ENCODE measurements at regions of chr17 and their contacts with region 1.

Region 1: DNA sequence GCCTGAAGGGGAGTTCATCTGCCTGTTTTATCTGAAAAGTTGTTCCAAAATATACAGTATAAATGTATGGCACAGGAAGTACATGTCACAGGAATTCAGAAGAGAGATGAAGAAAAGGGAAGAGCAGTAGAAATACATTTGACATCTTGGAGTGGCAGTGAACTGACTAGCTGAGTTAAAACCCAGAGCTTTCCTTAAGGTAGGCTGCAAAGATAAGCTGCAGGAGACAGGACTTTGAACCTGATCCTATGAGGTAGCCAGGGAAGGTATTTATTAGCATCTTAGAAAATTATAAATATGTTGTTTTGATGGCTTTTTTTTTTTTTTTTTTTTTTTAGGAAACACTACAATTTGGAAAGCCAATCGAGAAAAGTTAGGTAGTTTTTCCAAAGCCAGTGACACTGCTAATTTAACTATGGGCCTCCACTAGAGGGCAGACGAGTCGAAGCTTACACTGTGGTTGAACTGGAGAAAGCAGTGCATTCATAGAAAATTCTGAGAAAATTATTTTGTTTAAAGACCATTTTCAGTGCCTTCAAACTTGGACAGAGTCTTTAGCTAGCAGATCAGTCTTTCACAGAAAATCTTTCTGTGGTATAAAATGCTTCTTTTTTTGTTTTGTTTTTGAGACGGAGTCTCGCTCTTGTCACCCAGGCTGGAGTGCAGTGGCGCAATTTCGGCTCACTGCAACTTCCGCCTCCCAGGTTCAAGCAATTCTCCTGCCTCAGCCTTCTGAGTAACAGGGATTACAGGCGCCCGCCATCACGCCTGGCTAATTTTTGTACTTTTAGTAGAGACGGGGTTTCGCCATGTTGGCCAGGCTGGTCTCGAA is 122.3 kb downstream of the SSH2 start:
- DNase-seq: peak; percentile 62
- ATAC-seq: peak; percentile 65
- H3K4me3 Mint-ChIP-seq: no peak overlapping the region
- H3K27ac Mint-ChIP-seq: no peak overlapping the region
- H3K4me1 Mint-ChIP-seq: peaks cover 6% of the 10 kb centered on the region; the same call in 1 of the 2 replicates
- H3K27me3 Mint-ChIP-seq: no peaks in the 10 kb centered on the region
- CTCF ChIP-seq: peak; percentile 64

Region 2: DNA sequence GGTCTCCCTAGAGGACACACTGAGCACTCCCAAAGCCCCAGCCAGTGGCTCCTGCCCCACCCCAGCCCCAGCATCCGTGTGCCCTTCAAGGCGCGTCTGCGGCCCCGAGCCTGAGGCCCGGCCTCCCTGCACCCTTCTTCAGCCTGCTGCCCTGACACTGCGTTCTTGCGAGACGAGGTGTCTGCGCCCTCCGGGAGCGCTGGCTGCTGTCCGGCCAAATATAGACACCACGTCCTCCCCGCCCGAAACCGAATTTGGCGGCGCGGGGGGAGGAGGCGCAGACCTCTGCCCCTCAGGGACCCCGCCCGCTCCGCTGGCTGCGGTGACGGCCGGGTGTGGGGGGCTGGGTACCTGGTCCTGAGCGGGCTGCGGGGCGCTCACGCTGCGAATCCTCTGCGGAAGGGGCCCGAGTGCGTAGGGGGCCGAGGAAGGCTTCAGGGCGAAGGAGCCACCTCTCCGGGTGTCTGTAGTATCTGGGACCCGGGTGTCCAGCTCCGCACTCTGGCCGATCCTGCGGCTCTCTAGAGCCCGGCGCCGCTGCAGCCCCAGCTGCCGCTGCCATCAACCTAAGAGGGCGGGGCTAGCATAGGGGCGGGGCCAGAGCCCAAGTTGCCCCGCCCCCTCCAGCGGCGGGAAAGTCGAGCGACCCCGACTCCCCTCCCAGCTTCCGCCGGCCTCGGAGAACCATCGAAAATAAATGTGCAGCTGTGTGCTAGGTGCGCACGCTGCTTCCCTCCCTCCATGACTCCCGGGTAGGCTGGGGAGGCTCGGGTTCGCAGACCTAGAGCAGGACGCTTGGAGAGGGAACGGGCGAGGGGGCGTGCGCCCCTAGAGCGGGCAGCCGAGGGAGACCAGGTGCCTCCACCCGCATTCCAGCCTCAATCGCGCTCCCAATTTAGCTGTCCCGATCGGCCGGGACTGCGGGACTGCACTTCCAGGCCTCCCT is 185.1 kb before region 1 on chr17 and contains the start of gene CORO6:
- CTCF ChIA-PET with region 1: interaction called, 14 read pairs
- POLR2A ChIA-PET with region 1: no interaction called
- DNase-seq: peak; percentile 86
- ATAC-seq: peak; percentile 58
- H3K4me3 Mint-ChIP-seq: peak within 1 kb of the TSS; percentile 79
- H3K27ac Mint-ChIP-seq: peak within 1 kb of the TSS; percentile 82
- H3K4me1 Mint-ChIP-seq: peaks cover 48% of the 10 kb centered on the region
- H3K27me3 Mint-ChIP-seq: peaks cover 65% of the 10 kb centered on the region
- CTCF ChIP-seq: no peak
- total RNA-seq, gene CORO6: 6.4 to 8.9 TPM (median 7.5 TPM) in 3 replicates

Region 3: DNA sequence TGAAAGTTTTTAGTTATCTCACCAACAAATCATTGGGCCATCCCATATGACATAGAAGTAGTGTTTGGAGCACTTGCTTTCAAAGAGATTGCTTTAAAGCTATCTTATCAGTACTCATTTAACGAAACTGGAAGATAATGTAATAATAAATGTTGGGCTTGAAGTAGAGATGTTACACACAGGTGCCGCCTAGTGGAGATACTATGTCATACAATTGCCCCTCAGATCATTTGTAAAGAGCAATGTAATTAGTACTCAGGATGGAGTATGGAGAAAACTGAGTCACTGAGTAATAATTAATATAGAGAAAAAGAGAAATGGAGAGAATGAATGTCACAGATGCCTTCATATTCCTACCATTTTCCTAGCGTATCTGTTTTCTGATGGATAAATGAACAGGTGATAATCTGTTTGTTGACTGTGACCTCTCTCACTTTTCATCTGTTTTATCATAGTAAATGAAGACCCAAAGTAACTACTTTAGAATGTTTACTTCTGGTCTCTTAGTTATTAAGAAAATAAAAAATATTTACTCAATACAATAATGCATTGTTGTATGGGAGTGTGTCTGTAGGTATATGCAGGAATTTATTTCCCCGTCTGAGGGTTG is 214.1 kb after region 1 on chr17:
- CTCF ChIA-PET with region 1: interaction called, 13 read pairs
- POLR2A ChIA-PET with region 1: interaction called, 3 read pairs
- DNase-seq: no peak
- ATAC-seq: peak; percentile 56; the same call in 1 of the 2 replicates
- H3K4me3 Mint-ChIP-seq: no peak overlapping the region
- H3K27ac Mint-ChIP-seq: no peak overlapping the region
- H3K4me1 Mint-ChIP-seq: no peaks in the 10 kb centered on the region
- H3K27me3 Mint-ChIP-seq: peaks cover 2% of the 10 kb centered on the region; the same call in 1 of the 2 replicates
- CTCF ChIP-seq: peak; percentile 84